Ascending aorta (tissue), 2 donors: ENCODE measurements at regions of chr1 and their contacts with region 1.

Region 1: DNA sequence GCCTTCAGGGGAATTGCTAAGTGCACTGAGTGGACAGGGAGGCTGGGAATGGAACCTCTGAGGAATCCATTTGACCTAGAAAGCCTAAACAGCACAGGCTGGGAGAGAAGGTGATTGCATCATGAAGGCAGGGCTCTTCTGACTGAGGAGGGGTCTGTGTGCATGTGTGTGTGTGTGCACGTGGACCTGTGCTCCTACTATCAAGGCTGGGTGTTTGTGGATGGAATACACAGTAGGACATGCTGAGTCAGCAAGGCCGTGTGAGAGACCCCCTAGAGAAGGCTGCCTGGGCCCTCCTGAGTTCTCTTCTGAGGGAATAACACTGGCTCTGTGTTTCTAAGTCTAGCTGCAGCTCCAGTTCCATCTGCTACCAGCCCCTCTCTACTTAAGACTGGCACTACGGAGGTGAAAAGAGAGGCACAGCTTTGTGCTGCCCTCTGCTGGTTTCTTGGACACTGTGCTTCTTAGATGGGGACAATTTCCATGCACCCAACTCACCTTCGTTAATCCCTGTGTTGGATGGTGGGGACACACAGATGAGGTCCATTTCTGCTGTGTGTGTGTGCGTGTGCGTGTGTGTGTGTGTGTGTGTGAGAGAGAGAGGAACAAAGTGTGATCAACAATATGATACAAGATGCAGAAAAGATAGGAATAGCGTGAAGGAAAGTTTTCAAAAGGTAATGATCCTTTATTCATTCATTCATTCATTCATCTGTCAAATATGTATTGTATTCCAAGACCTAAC is 6.2 kb upstream of the EFCAB14 start:
- DNase-seq: peak in 1 of 2 donors; percentile 80
- H3K4me3 ChIP-seq: no peak overlapping the region
- H3K27ac ChIP-seq: no peak overlapping the region
- H3K4me1 ChIP-seq: no peaks in the 10 kb centered on the region
- H3K27me3 ChIP-seq: no peaks in the 10 kb centered on the region
- CTCF ChIP-seq: peak; percentile 65 to 83 (median 66)

Region 2: DNA sequence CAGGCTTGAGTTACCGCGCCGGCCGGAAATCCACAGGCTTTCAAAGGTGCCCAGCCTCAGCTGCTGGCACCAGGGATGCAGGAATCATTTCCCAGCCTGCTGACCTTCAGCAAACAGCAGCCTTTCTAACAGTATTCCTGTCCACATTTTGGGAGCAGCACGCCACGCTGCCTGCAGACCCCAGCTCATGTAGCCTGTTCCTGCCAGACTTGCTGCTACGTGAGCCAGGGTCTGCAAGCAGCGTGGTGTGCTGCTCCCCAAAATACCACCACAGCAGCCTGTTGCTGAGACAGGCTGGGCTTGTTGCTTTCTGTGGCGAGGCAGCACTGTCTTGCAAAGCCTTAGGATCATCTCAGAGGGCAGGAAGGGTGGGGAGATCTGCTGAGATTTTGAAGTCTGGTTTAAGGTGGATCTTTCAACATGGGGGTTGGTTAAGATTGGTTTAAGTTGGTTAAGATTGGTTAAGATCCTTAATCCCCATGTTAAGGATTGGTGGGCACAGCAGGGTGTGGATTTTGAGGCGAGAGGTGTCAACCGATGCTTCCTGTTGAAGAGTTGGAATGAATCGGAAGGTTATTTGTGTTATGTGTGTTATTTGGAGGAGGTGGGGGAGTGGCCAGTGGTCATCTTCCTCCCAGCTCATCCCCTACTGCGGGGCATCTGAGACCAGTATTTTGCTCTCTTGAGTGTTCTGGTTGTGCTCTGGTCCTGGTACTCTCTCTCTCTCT is 318.1 kb before region 1 on chr1:
- intact Hi-C with region 1: loop called (anchors 1 kb)
- DNase-seq: no peak
- H3K4me3 ChIP-seq: peak overlapping the region; percentile 41 to 50
- H3K27ac ChIP-seq: no peak overlapping the region
- H3K4me1 ChIP-seq: peaks cover 6 to 21% of the 10 kb centered on the region in 2 donors
- H3K27me3 ChIP-seq: no peaks in the 10 kb centered on the region
- CTCF ChIP-seq: no peak

Region 3: DNA sequence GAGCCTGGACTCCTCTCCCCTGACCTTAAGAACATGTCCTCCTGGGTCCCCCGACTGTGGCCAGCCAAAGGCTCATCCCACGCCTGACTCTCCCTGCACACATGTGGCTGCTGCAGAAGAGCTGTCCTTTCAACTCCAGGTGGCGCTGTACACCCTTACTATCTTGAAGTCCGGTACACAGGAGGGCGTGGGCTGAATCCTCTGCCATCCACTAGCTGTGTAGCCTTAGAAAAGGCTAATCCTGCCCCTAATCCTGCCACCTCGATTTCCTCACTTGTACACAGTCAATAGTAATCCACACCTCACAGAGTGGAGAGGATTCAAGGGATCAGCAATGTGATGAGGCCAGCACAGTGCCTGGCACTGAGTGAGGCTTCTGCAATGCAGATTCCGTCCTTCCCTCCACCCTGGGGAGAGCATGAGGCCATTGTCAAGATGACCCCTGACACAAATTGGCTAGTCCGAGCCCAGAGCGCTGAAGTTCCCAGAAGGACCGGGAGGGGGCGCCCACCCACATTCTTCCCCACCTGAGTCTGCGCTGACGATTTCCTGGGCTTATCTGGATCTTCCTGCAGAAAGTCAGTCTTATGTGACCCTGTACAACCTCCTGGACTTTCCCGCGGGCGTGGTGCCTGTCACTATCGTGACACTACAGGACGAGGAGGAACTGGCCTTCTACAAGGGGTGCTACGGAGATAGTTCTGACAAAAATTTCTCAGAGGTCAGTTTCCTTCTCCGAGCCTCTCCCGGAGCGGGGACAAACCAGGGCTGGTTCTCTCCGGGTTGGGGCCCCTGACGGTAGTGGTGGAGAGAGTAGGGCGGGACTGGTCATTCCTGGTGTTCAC is 282.6 kb before region 1 on chr1:
- intact Hi-C with region 1: loop called (anchors 10 kb)
- DNase-seq: peak in 1 of 2 donors; percentile 88
- H3K4me3 ChIP-seq: peak overlapping the region; percentile 20 to 50
- H3K27ac ChIP-seq: no peak overlapping the region
- H3K4me1 ChIP-seq: no peaks in the 10 kb centered on the region
- H3K27me3 ChIP-seq: no peaks in the 10 kb centered on the region
- CTCF ChIP-seq: peak; percentile 65 to 93 (median 87)

Region 4: GRCh38 chr1:46477153-46477929 is 247.8 kb before region 1 on chr1:
- intact Hi-C with region 1: loop called (anchors 2 kb)
- DNase-seq: peak in 1 of 2 donors; percentile 80
- H3K4me3 ChIP-seq: no peak overlapping the region
- H3K27ac ChIP-seq: no peak overlapping the region
- H3K4me1 ChIP-seq: no peaks in the 10 kb centered on the region
- H3K27me3 ChIP-seq: no peaks in the 10 kb centered on the region
- CTCF ChIP-seq: peak; percentile 66 to 82 (median 77)